ENCODE measurements at regions of chr1 and their contacts with region 1.

Region 1: GRCh38 chr1:204975570-204976235 is 67.3 kb upstream of the CNTN2 start:
- DNase-seq: peak; percentile 31 to 83
- H3K4me3 ChIP-seq: no peak overlapping the region
- H3K4me1 ChIP-seq: no peaks in the 10 kb centered on the region
- H3K27me3 ChIP-seq: peaks cover 17% of the 10 kb centered on the region

Region 2: DNA sequence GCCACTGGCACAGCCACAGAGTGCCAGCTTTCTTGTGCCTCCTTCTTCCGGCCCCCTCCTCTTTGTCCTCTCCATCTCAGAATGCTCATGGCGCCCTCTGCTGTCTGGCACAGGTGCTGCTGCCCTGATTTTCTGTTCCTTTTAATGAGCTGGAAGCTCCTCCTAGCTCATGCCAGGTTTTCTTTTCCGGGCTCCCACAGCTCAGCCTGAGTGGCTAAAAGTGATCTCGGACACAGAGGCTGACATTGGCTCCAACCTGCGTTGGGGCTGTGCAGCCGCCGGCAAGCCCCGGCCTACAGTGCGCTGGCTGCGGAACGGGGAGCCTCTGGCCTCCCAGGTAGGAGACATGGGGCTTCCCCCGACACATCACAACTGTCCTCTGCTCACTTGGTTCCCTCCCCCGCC is 86.0 kb after region 1 on chr1:
- in situ Hi-C with region 1: loop called (anchors 5 kb)
- DNase-seq: peak; percentile 66 to 90
- H3K4me3 ChIP-seq: no peak overlapping the region
- H3K4me1 ChIP-seq: no peaks in the 10 kb centered on the region
- H3K27me3 ChIP-seq: peaks cover 2% of the 10 kb centered on the region; the same call in 1 of the 2 replicates